SK-N-SH (cell line): ENCODE measurements at regions of chr10 and their contacts with region 1.

Region 1: GRCh38 chr10:93352638-93353383 is 129.3 kb downstream of the MYOF start:
- DNase-seq: peak; percentile 44
- H3K4me3 ChIP-seq: no peak overlapping the region
- H3K27ac ChIP-seq: no peak overlapping the region
- H3K4me1 ChIP-seq: no peaks in the 10 kb centered on the region
- H3K27me3 ChIP-seq: no peaks in the 10 kb centered on the region
- CTCF ChIP-seq: peak; percentile 83
- EP300 ChIP-seq: no peak
- RAD21 ChIP-seq: peak; percentile 68

Region 2: GRCh38 chr10:92965314-92965713 is 387.5 kb before region 1 on chr10:
- CTCF ChIA-PET with region 1: interaction called, 15 read pairs
- POLR2A ChIA-PET with region 1: no interaction called
- DNase-seq: peak; percentile 15
- H3K4me3 ChIP-seq: peak overlapping the region in 1 of 2 experiments; percentile 19; a peak in 1 of 4 replicates
- H3K27ac ChIP-seq: peak overlapping the region in 1 of 2 experiments; percentile 52; a peak in 2 of 4 replicates
- H3K4me1 ChIP-seq: no peaks in the 10 kb centered on the region
- H3K27me3 ChIP-seq: no peaks in the 10 kb centered on the region
- CTCF ChIP-seq: peak; percentile 85
- EP300 ChIP-seq: no peak
- RAD21 ChIP-seq: peak; percentile 55

Region 3: DNA sequence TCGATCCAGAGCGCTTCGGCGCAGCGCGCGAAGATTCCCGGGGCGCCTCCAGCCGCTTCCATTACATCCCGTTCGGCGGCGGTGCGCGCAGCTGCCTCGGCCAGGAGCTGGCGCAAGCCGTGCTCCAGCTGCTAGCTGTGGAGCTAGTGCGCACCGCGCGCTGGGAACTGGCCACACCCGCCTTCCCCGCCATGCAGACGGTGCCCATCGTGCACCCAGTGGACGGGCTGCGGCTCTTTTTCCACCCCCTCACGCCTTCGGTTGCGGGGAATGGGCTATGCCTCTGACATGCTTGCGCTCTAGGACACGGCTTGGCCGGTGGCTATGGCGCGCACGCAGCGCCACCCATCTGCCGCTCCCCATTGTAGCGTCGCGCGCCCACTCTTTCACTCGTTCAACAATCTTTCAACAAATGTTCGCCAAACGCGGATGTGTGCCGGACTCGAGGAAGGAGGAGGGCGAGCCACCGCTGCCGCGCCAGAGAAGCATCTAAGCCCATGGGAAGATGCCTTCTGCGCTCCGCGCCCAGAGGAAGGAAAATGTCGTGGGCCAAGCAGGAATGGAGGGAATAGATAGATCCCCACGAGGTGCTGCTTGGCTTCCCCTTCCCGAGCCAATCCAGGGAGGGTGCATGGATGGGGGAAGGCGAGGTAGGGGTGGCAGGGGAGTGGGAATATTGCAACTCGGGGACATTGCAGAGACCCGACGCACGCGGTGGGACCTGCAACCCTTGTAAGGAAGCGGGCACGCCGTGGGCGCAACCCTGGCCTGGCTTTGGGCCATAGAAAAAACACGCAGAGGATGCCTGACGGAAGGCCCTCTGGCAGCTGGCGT is 284.2 kb before region 1 on chr10:
- CTCF ChIA-PET with region 1: interaction called, 10 read pairs
- POLR2A ChIA-PET with region 1: no interaction called
- DNase-seq: peak; percentile 71
- H3K4me3 ChIP-seq: peak overlapping the region in 1 of 2 experiments; percentile 35
- H3K27ac ChIP-seq: no peak overlapping the region
- H3K4me1 ChIP-seq: peaks cover 0 to 32% of the 10 kb centered on the region in 2 experiments; a peak in 1 of 4 replicates
- H3K27me3 ChIP-seq: peaks cover 59% of the 10 kb centered on the region
- CTCF ChIP-seq: 0 out of 2 replicates have a peak, but pooled peaks have one; percentile 18
- EP300 ChIP-seq: no peak
- RAD21 ChIP-seq: no peak

Region 4: DNA sequence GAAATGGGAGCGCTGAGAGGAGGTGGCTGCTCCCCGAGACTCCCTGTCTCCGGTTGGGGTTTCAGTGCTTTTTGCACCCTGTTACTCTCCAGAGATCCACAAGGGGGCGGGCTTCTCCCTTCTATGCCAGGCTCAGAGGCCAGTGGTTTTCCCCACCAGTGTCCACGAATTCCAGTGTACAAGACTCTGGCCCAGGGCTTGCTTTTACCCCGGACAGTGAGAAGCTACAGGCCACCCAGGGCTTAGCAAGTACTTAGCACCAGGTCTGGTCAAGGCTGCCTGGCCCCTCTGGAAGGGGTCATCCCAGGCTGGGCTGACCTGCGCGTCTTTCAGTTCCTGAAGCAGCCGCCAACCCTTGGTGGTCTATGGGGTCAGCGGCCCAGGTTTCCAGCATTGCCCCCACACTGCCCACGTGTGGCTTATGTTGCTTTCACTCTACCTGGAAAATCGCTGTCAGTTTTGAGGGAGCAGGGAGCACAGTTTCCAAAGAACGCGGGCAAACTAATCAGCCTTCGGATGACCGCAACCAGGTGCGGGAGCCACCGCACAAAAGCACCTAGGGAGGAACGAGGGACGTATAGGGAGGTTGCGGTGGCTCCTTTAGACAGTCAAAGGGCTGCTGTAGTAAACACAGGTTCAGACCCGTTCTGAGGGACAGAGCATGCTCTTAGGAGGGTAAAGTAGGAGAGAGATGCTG is 272.3 kb before region 1 on chr10:
- CTCF ChIA-PET with region 1: interaction called, 33 read pairs
- POLR2A ChIA-PET with region 1: no interaction called
- DNase-seq: peak; percentile 84
- H3K4me3 ChIP-seq: peak overlapping the region; percentile 15 to 42; a peak in 2 of 4 replicates
- H3K27ac ChIP-seq: no peak overlapping the region
- H3K4me1 ChIP-seq: peaks cover 0 to 10% of the 10 kb centered on the region in 2 experiments; a peak in 1 of 4 replicates
- H3K27me3 ChIP-seq: peaks cover 9% of the 10 kb centered on the region; the same call in 1 of the 2 replicates
- CTCF ChIP-seq: peak; percentile 88
- EP300 ChIP-seq: no peak
- RAD21 ChIP-seq: peak; percentile 78

Region 5: GRCh38 chr10:93288654-93289634 is 63.9 kb before region 1 on chr10:
- CTCF ChIA-PET with region 1: interaction called, 14 read pairs
- POLR2A ChIA-PET with region 1: no interaction called
- DNase-seq: peak; percentile 77
- H3K4me3 ChIP-seq: no peak overlapping the region; a peak in 1 of 4 replicates
- H3K27ac ChIP-seq: no peak overlapping the region
- H3K4me1 ChIP-seq: no peaks in the 10 kb centered on the region
- H3K27me3 ChIP-seq: no peaks in the 10 kb centered on the region
- CTCF ChIP-seq: peak; percentile 80
- EP300 ChIP-seq: no peak
- RAD21 ChIP-seq: peak; percentile 89

Region 6: DNA sequence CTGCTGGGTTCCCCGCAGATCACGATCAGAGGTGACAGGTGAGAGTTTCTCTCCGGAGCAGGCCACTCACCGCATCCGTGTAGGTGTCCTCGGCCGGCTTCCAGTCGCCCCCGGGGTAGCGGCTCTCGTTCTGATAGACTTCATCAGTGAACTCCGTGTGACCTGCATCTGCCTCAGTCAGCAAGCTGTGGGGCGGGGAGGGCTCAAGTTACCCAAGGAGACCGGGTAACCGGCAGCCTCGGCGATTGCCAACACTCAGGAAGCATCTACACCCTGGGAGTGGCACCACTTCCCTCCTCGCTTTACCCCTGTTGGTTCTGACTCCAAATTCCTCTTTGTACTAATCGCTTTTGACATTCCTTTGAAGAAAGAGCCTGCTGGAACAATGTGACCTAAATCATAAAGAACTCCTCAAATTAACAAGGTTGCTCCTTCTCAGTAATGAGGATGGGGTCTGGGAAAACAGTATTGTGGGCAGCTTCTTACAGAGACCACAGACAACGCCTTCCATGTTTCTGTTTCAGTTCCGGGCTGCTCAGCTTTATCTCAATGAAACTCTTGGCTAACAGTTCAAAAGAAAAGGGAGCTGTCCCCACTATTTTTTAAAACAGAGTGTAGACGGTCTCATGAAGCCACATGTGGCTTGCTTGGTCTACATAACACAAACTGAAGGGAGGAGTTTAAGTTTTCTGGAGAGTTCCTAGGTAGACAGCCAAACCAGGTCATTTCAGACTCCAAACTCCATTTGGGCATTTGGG is 11.3 kb after region 1 on chr10:
- CTCF ChIA-PET with region 1: interaction called, 18 read pairs
- POLR2A ChIA-PET with region 1: no interaction called
- DNase-seq: no peak
- H3K4me3 ChIP-seq: no peak overlapping the region
- H3K27ac ChIP-seq: no peak overlapping the region
- H3K4me1 ChIP-seq: no peaks in the 10 kb centered on the region
- H3K27me3 ChIP-seq: no peaks in the 10 kb centered on the region
- CTCF ChIP-seq: no peak
- EP300 ChIP-seq: no peak
- RAD21 ChIP-seq: no peak